ENCODE measurements at regions of chr4 and their contacts with region 1.

Region 1: DNA sequence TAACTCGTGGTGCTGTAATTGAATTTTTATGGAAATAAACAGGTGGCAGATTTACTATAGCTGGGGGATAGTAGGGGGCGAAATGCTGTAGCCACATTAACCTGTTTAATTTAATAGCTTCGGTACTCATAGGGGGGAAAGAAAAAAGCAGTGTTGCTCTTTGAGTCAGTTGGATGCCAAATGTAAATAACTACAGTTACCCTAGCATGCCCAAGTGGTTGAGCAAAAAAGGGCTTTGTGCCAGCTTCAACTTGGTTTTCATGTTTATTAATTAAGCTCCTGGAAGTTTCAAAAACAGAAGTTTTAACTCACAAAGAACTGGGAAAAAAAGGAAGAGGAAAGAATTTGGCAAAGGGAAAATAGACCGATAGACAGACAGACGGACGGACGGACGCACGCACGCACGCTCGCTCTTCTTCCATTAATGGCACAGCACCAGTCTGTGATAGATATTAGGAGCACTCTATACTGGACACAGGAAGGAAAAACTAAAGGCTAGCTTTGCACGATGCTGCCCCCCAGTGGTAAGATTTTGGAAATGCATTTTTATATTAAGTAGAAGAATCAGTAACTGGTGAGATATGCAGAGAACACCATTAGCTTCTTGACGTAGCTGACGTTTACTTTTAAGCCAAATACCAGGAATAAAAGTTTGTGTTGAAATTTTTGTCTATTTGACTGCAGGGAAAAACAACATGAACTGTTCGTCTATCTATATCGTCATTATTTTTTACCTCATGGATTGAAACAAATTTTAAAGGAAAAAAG is 151.8 kb downstream of the SLC7A11 start:
- DNase-seq: peak; percentile 17
- ATAC-seq: peak; percentile 94
- H3K4me3 ChIP-seq: no peak overlapping the region
- H3K27ac ChIP-seq: no peak overlapping the region
- H3K4me1 ChIP-seq: no peaks in the 10 kb centered on the region
- H3K27me3 ChIP-seq: no peaks in the 10 kb centered on the region; a peak in 1 of 4 replicates
- CTCF ChIP-seq: peak; percentile 68 to 77 (median 71)
- EP300 ChIP-seq: no peak
- POLR2A ChIP-seq: no peak
- RAD21 ChIP-seq: peak; percentile 73

Region 2: DNA sequence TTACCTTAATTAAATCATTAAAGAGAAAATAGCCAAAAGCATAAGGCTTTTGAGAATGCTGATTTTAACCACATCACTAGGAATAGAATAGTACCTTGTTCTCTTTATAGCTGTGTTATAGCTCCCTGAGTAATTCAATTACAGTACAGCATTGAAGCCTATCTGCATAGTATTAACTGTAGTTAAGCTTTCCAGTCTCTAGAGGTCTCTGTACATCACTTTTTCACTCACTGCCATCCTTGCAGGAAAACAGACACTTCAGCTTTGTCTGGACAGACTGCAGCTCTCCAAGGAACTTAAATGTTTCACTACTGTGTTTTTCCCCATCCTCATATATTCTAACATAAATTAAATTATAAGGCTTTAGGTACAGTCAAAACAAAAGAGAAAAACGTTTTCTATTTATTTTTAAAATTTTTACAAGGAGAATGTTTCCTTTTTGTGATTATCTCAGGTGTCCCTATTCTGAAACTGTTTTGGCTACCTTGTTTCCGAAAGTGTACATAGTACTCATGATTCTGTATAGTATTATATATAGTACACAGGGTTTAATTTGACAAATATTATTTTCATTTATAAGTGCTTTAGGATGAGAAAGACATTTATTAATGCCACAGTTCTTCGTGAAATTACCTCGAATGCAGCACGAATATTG is 965.9 kb before region 1 on chr4:
- CTCF ChIA-PET with region 1: interaction called, 10 read pairs
- POLR2A ChIA-PET with region 1: no interaction called
- RAD21 ChIA-PET with region 1: interaction called, 6 read pairs
- SMC1A ChIA-PET with region 1: interaction called, 5 read pairs
- in situ Hi-C with region 1: no loop called
- intact Hi-C with region 1: loop called (anchors 10 kb)
- DNase-seq: peak; percentile 1
- ATAC-seq: peak; percentile 96
- H3K4me3 ChIP-seq: no peak overlapping the region
- H3K27ac ChIP-seq: no peak overlapping the region
- H3K4me1 ChIP-seq: no peaks in the 10 kb centered on the region
- H3K27me3 ChIP-seq: no peaks in the 10 kb centered on the region
- CTCF ChIP-seq: peak; percentile 42 to 64 (median 43); a peak in 5 of 6 replicates
- EP300 ChIP-seq: no peak
- POLR2A ChIP-seq: no peak
- RAD21 ChIP-seq: peak; percentile 63

Region 3: DNA sequence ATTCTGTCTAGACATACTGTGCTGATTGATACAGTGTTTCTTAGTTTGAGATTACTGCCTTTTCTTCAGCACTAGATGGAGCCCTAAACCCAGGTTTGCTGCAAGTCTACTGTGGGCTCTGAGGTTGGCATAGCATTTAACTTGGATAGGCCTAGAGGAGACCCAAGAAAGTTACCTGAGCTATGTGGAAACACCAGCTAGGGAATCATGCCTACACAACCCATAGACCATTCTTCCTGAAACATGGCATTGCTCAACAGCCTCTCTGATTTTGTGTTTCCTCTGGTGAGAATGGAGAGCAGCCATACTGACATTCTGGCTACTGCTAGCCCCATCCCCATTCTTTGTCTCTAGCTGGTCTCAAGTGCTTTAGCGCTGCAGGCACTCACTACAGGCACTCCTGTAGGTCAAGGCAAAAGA is 270.4 kb before region 1 on chr4:
- CTCF ChIA-PET with region 1: interaction called, 14 read pairs
- POLR2A ChIA-PET with region 1: no interaction called
- RAD21 ChIA-PET with region 1: interaction called, 8 read pairs
- SMC1A ChIA-PET with region 1: interaction called, 22 read pairs
- in situ Hi-C with region 1: no loop called
- intact Hi-C with region 1: loop called (anchors 1 kb)
- DNase-seq: peak; percentile 1
- ATAC-seq: peak; percentile 97
- H3K4me3 ChIP-seq: no peak overlapping the region
- H3K27ac ChIP-seq: no peak overlapping the region
- H3K4me1 ChIP-seq: no peaks in the 10 kb centered on the region
- H3K27me3 ChIP-seq: no peaks in the 10 kb centered on the region
- CTCF ChIP-seq: peak; percentile 62 to 77 (median 66)
- EP300 ChIP-seq: no peak
- POLR2A ChIP-seq: no peak
- RAD21 ChIP-seq: peak; percentile 89

Region 4: DNA sequence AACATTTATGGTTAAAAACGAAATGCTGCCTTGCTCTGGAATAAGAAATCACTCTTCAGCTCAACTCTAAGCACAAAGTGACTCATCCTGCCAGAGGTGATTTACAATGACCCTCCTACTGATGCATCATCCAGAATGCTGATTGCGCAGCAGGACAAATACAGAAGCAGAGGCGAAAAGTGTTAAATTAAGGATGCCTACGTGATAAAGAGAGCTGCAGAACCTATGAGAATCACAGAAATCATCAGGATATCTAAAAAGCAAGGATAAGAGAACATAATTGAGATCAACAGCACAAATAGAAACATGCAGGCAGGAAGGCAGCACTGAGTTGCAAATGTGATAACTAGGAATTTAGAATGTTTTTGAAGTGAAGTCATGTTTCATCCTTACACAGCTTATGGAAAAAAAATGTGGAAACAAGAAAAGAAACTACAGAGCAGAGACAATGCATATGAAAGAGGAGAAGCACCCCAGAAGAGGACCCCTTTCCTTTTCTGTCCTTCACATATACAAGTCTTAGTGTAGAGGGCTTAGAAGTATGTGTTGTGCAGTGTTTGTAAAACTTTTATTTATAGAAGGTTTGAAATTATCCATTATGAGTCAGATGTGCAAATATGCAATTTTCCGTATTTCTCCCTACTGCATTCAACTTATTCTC is 36.6 kb before region 1 on chr4:
- CTCF ChIA-PET with region 1: interaction called, 11 read pairs
- POLR2A ChIA-PET with region 1: no interaction called
- RAD21 ChIA-PET with region 1: no interaction called
- SMC1A ChIA-PET with region 1: no interaction called
- in situ Hi-C with region 1: no loop called
- intact Hi-C with region 1: no loop called
- DNase-seq: no peak
- ATAC-seq: no peak
- H3K4me3 ChIP-seq: no peak overlapping the region
- H3K27ac ChIP-seq: no peak overlapping the region
- H3K4me1 ChIP-seq: no peaks in the 10 kb centered on the region
- H3K27me3 ChIP-seq: no peaks in the 10 kb centered on the region
- CTCF ChIP-seq: no peak
- EP300 ChIP-seq: no peak
- POLR2A ChIP-seq: no peak
- RAD21 ChIP-seq: no peak

Region 5: DNA sequence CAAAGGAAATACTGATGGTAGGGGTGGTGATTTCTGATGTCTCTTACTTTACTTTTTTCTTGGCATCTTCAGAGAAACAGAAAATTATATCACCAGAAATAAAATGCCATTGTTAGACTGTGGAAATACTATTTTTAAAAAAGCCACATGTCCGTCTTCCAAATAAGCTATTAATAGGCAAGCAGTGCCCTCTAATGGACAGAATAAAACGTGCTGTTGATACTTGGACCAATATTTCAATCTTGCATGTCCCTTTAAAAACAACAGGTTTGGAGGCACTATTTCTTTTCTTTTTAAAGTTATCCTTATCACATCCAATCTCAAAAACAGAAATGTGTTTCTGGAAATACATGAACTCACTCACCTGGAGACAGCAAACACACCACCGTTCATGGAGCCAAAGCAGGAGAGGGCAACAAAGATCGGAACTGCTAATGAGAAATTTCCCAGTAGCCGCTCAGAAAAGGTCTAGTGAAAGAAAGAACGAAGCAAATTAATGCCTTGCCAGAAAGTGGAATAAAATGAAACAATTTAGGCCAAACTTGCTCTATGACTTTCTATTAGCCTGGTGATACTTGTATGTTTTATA is 92.6 kb after region 1 on chr4:
- CTCF ChIA-PET with region 1: interaction called, 20 read pairs
- POLR2A ChIA-PET with region 1: no interaction called
- RAD21 ChIA-PET with region 1: interaction called, 13 read pairs
- SMC1A ChIA-PET with region 1: interaction called, 25 read pairs
- in situ Hi-C with region 1: no loop called
- intact Hi-C with region 1: loop called (anchors 2 kb)
- DNase-seq: no peak
- ATAC-seq: peak; percentile 61
- H3K4me3 ChIP-seq: no peak overlapping the region
- H3K27ac ChIP-seq: no peak overlapping the region
- H3K4me1 ChIP-seq: no peaks in the 10 kb centered on the region
- H3K27me3 ChIP-seq: no peaks in the 10 kb centered on the region
- CTCF ChIP-seq: peak; percentile 35 to 67 (median 59); a peak in 5 of 6 replicates
- EP300 ChIP-seq: no peak
- POLR2A ChIP-seq: no peak
- RAD21 ChIP-seq: peak; percentile 84

Region 6: DNA sequence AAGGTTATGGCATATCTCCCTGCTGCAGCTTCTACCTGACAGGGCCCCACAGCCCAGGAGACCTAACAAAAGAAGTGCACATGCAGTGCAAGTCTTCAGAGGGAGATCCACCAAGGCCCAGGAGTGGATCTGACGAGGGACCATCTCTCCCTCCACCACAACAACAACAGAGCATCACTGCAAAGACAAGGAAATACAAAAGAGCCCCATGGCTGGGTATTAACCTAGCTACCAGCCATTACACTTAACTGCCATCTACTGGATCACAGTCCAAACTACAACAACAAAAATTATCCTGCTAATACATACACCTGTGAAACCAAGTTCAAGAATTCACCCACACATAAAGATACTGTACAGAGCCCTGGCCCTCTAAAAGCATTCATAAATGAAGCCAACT is 432.0 kb after region 1 on chr4:
- CTCF ChIA-PET with region 1: interaction called, 20 read pairs
- POLR2A ChIA-PET with region 1: no interaction called
- RAD21 ChIA-PET with region 1: interaction called, 11 read pairs
- SMC1A ChIA-PET with region 1: interaction called, 4 read pairs
- in situ Hi-C with region 1: no loop called
- intact Hi-C with region 1: no loop called
- DNase-seq: no peak
- ATAC-seq: peak; percentile 85
- H3K4me3 ChIP-seq: no peak overlapping the region
- H3K27ac ChIP-seq: no peak overlapping the region
- H3K4me1 ChIP-seq: no peaks in the 10 kb centered on the region
- H3K27me3 ChIP-seq: no peaks in the 10 kb centered on the region
- CTCF ChIP-seq: peak; percentile 35 to 57 (median 52); a peak in 4 of 6 replicates
- EP300 ChIP-seq: no peak
- POLR2A ChIP-seq: no peak
- RAD21 ChIP-seq: peak; percentile 69

Region 7: DNA sequence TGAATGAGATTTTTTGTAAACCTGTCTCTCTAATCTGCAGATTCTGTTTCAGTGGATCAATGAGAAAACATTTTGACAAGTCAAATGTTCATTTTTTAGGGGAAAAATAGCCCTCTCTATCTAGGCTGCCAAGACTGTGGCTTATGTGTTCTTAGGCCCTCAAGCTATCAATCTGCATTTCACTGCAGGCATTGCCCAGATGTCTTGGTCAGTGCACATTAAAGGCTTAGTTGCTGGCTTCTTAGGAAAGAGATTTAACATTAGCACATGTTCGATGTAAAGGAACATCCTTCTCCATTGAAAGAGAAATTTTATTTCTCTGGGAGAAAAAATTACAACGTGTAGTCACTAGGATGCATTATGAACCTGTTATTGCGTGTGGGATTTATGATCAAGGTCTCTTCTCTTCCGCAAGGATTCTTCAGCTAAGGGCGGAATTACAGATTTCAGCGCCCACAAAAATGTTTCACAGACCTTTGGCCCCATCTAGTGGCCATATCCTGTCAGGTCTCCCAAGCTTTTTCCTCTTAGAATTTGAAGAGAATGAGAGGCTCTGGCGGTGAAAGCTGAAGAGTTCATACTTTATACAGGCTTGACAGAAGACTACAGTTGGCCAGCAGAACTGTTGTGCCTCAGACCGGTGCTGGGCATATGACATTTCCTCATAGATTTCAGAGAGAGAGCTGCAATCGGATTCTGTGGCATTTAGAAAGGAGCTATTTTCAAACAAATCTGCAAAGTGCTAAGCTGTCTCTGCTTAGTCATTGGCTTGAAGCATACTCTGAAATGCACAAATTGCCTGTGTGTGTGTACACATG is 780.6 kb after region 1 on chr4:
- CTCF ChIA-PET with region 1: interaction called, 11 read pairs
- POLR2A ChIA-PET with region 1: no interaction called
- RAD21 ChIA-PET with region 1: interaction called, 8 read pairs
- SMC1A ChIA-PET with region 1: interaction called, 8 read pairs
- in situ Hi-C with region 1: no loop called
- intact Hi-C with region 1: loop called (anchors 2 kb)
- DNase-seq: peak; percentile 7
- ATAC-seq: peak; percentile 83
- H3K4me3 ChIP-seq: no peak overlapping the region
- H3K27ac ChIP-seq: no peak overlapping the region
- H3K4me1 ChIP-seq: no peaks in the 10 kb centered on the region
- H3K27me3 ChIP-seq: no peaks in the 10 kb centered on the region
- CTCF ChIP-seq: peak; percentile 75 to 84 (median 82)
- EP300 ChIP-seq: no peak
- POLR2A ChIP-seq: no peak
- RAD21 ChIP-seq: peak; percentile 85

Measured in GM12878 (cell line).